Activated naive CD4-positive, alpha-beta T cell treated with anti-CD3 and anti-CD28 coated beads for 36 hours (primary cell): ENCODE measurements at regions of chr19 and their contacts with region 1.

Region 1: DNA sequence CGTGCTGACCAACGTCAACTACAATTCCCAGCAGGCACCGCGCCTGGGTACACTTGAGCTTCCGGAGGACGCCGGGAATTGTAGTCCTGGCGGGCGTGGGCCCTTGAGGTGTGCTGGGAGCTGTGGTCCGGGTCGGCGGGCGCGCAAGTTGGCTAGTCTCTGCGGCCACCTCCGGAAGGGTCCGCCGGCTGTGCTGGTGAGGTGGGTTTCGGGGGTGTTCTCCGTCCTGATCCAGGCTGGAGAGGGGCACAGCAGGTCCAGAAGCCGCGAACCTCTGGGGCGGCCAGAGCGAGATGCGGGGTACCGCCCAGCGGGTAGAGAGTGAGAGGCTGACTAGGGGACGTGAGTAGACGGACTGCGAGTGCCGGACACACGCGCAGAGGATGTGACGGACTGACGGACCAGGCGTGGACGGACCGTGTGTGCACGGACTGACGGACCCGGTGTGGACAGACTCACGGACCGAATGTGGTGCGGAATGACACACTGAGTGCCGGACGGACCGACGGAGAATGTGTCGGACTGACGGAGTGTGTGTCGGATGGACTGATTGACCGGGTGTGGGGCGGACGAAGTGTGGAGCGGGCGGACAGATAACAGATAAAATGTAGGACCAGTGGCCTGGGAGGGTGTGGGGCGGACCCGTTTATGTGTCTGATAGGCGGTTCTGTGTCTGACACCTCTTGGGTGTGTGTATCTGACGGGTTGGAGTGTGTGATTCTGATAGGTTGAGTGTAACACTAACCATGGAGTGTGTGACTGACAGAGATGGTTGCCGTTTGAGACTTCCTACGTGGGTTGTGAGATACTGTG is at the start of gene ZSCAN22:
- DNase-seq: peak; percentile 95
- H3K4me3 Mint-ChIP-seq: no peak within 1 kb of the TSS
- H3K27ac Mint-ChIP-seq: no peak within 1 kb of the TSS
- H3K4me1 Mint-ChIP-seq: no peaks in the 10 kb centered on the region
- H3K27me3 Mint-ChIP-seq: no peaks in the 10 kb centered on the region
- total RNA-seq, gene ZSCAN22: 1.2 to 1.3 TPM

Region 2: GRCh38 chr19:58243351-58243750 is 83.8 kb before region 1 on chr19:
- CTCF ChIA-PET with region 1: no interaction called
- intact Hi-C with region 1: no loop called
- DNase-seq: no peak
- H3K4me3 Mint-ChIP-seq: no peak overlapping the region
- H3K27ac Mint-ChIP-seq: no peak overlapping the region
- H3K4me1 Mint-ChIP-seq: no peaks in the 10 kb centered on the region
- H3K27me3 Mint-ChIP-seq: no peaks in the 10 kb centered on the region

Region 3: GRCh38 chr19:58305065-58305931 is 21.8 kb before region 1 on chr19 and contains the start of gene ERVK3-1:
- CTCF ChIA-PET with region 1: interaction called, 3 read pairs
- intact Hi-C with region 1: loop called (anchors 1 kb)
- DNase-seq: peak; percentile 95
- H3K4me3 Mint-ChIP-seq: peak within 1 kb of the TSS; percentile 100
- H3K27ac Mint-ChIP-seq: peak within 1 kb of the TSS; percentile 99
- H3K4me1 Mint-ChIP-seq: peaks cover 46% of the 10 kb centered on the region
- H3K27me3 Mint-ChIP-seq: no peaks in the 10 kb centered on the region
- total RNA-seq, gene ERVK3-1: 24.5 to 27.7 TPM

Region 4: GRCh38 chr19:58400916-58401839 is 74.1 kb after region 1 on chr19:
- CTCF ChIA-PET with region 1: no interaction called
- intact Hi-C with region 1: loop called (anchors 1 kb)
- DNase-seq: peak; percentile 99
- H3K4me3 Mint-ChIP-seq: peak overlapping the region; percentile 94
- H3K27ac Mint-ChIP-seq: peak overlapping the region; percentile 26
- H3K4me1 Mint-ChIP-seq: peaks cover 9% of the 10 kb centered on the region
- H3K27me3 Mint-ChIP-seq: peaks cover 11% of the 10 kb centered on the region

Region 5: GRCh38 chr19:58439576-58440554 is 112.7 kb after region 1 on chr19 and contains the start of gene ZNF132:
- CTCF ChIA-PET with region 1: no interaction called
- intact Hi-C with region 1: loop called (anchors 5 kb)
- DNase-seq: peak; percentile 98
- H3K4me3 Mint-ChIP-seq: peak within 1 kb of the TSS; percentile 95
- H3K27ac Mint-ChIP-seq: peak within 1 kb of the TSS; percentile 88
- H3K4me1 Mint-ChIP-seq: peaks cover 18% of the 10 kb centered on the region
- H3K27me3 Mint-ChIP-seq: no peaks in the 10 kb centered on the region
- total RNA-seq, gene ZNF132: 2.8 to 2.9 TPM

Region 6: GRCh38 chr19:58519355-58520256 is 192.5 kb after region 1 on chr19 and contains the start of gene ZBTB45:
- CTCF ChIA-PET with region 1: no interaction called
- intact Hi-C with region 1: loop called (anchors 1 kb)
- DNase-seq: peak; percentile 94
- H3K4me3 Mint-ChIP-seq: peak within 1 kb of the TSS; percentile 93
- H3K27ac Mint-ChIP-seq: peak within 1 kb of the TSS; percentile 98
- H3K4me1 Mint-ChIP-seq: peaks cover 38% of the 10 kb centered on the region
- H3K27me3 Mint-ChIP-seq: no peaks in the 10 kb centered on the region
- total RNA-seq, gene ZBTB45: 5.5 to 6.0 TPM